Calu3 (cell line): ENCODE measurements at regions of chr7 and their contacts with region 1.

Region 1: DNA sequence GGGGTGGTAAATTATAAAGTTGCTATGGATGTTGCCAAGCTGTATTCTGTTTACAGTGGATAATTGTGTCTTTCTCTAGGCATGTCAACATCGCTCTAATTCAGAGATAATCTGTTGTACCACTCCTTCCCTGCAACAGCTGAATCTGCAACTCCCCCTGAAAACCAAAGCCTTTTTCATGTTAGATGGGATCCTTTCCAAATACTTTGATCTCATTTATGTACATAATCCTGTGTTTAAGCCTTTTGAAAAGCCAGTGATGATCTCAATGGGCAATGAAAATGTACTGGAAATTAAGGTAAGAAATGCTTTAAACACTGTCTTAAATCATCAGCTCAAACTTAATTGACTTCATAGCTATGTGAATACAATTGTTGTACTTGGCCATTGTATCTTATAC is 91.0 kb downstream of the MET start:
- DNase-seq: no peak
- H3K4me3 Mint-ChIP-seq: no peak overlapping the region
- H3K27ac Mint-ChIP-seq: no peak overlapping the region
- H3K4me1 Mint-ChIP-seq: peaks cover 22% of the 10 kb centered on the region
- H3K27me3 Mint-ChIP-seq: no peaks in the 10 kb centered on the region
- CTCF ChIP-seq: no peak

Region 2: GRCh38 chr7:116726713-116727431 is 36.1 kb before region 1 on chr7:
- CTCF ChIA-PET with region 1: no interaction called
- intact Hi-C with region 1: loop called (anchors 5 kb)
- DNase-seq: no peak
- H3K4me3 Mint-ChIP-seq: no peak overlapping the region
- H3K27ac Mint-ChIP-seq: peak overlapping the region; percentile 31
- H3K4me1 Mint-ChIP-seq: peaks cover 51% of the 10 kb centered on the region
- H3K27me3 Mint-ChIP-seq: no peaks in the 10 kb centered on the region
- CTCF ChIP-seq: no peak